CD8-positive, alpha-beta T cell (primary cell): ENCODE measurements at regions of chr13 and their contacts with region 1.

Region 1: DNA sequence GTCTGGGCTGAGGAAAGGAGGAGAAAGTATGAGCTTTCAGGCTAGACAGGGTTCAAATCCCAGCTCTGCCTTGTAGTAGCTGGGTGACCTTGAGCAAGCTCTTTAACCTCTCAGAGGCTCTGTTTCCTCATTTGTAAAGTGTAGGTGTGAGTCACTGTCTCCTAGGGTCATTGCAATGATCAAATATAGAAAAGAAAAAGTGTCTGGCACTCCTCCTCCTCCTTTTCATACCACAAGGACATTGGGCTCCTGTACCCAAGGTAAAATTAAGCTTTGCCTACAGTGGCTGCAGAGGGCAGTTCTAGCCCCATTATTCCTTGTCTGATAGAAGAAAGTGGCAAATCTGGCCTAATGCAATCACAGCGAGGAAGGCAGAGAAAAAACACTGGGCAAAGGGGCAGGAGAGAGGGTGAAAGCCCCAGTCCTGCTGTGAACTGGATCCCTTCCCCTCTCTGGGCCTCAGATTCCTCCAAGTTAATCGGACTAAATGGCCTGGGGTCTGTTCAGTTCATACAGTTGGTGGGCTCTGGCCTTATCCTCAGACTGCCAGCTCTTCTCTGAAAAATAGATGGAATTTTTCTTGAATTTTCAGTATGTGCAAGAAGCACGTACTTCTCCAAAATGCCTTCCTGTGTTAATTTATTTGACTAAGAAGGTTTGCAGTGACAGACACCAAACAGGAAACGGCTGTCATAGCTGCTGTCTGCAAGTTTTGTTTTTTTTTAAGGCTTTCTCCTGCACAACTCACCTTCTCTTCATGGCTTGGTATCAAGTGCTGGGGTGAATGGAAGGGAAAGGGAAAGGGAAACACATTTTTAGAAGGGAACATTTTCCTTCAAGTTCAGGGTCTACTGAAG is 35.3 kb downstream of the RGCC start:
- DNase-seq: peak in 6 of 9 experiments; percentile 26 to 84 (median 63)
- ATAC-seq: peak; percentile 67
- H3K4me3 ChIP-seq: peak overlapping the region in 1 of 2 experiments; percentile 18
- H3K4me3 Mint-ChIP-seq: peak overlapping the region; percentile 75
- H3K27ac ChIP-seq: peak overlapping the region; percentile 70 to 89
- H3K27ac Mint-ChIP-seq: peak overlapping the region; percentile 99
- H3K4me1 ChIP-seq: peaks cover 70% of the 10 kb centered on the region
- H3K4me1 Mint-ChIP-seq: peaks cover 84% of the 10 kb centered on the region
- H3K27me3 ChIP-seq: no peaks in the 10 kb centered on the region
- H3K27me3 Mint-ChIP-seq: no peaks in the 10 kb centered on the region
- CTCF ChIP-seq: no peak

Region 2: GRCh38 chr13:40863723-40864122 is 628.9 kb before region 1 on chr13:
- CTCF ChIA-PET with region 1: no interaction called
- POLR2A ChIA-PET with region 1: no interaction called
- intact Hi-C with region 1: no loop called
- DNase-seq: no peak
- ATAC-seq: no peak
- H3K4me3 ChIP-seq: no peak overlapping the region
- H3K4me3 Mint-ChIP-seq: no peak overlapping the region
- H3K27ac ChIP-seq: no peak overlapping the region
- H3K27ac Mint-ChIP-seq: no peak overlapping the region
- H3K4me1 ChIP-seq: no peaks in the 10 kb centered on the region
- H3K4me1 Mint-ChIP-seq: no peaks in the 10 kb centered on the region
- H3K27me3 ChIP-seq: no peaks in the 10 kb centered on the region
- H3K27me3 Mint-ChIP-seq: no peaks in the 10 kb centered on the region
- CTCF ChIP-seq: no peak

Region 3: GRCh38 chr13:41310963-41311606 is 181.5 kb before region 1 on chr13 and contains the start of gene NAA16:
- CTCF ChIA-PET with region 1: no interaction called
- POLR2A ChIA-PET with region 1: no interaction called
- intact Hi-C with region 1: no loop called
- DNase-seq: peak; percentile 87 to 98 (median 95)
- ATAC-seq: peak; percentile 88
- H3K4me3 ChIP-seq: peak within 1 kb of the TSS; percentile 72 to 97
- H3K4me3 Mint-ChIP-seq: peak within 1 kb of the TSS; percentile 98
- H3K27ac ChIP-seq: peak within 1 kb of the TSS; percentile 72 to 83
- H3K27ac Mint-ChIP-seq: peak within 1 kb of the TSS; percentile 96
- H3K4me1 ChIP-seq: peaks cover 25% of the 10 kb centered on the region
- H3K4me1 Mint-ChIP-seq: peaks cover 41% of the 10 kb centered on the region
- H3K27me3 ChIP-seq: no peaks in the 10 kb centered on the region
- H3K27me3 Mint-ChIP-seq: no peaks in the 10 kb centered on the region
- CTCF ChIP-seq: no peak
- total RNA-seq, gene NAA16: 103 to 105 TPM

Region 4: GRCh38 chr13:41465241-41465847 is 27.3 kb before region 1 on chr13:
- CTCF ChIA-PET with region 1: interaction called, 89 read pairs
- POLR2A ChIA-PET with region 1: interaction called, 26 read pairs
- intact Hi-C with region 1: loop called (anchors 2 kb)
- DNase-seq: peak; percentile 75 to 95 (median 89)
- ATAC-seq: peak; percentile 72
- H3K4me3 ChIP-seq: peak overlapping the region in 1 of 2 experiments; percentile 6
- H3K4me3 Mint-ChIP-seq: peak overlapping the region; percentile 88
- H3K27ac ChIP-seq: peak overlapping the region; percentile 82 to 91
- H3K27ac Mint-ChIP-seq: peak overlapping the region; percentile 99
- H3K4me1 ChIP-seq: peaks cover 90% of the 10 kb centered on the region
- H3K4me1 Mint-ChIP-seq: peaks cover 92% of the 10 kb centered on the region
- H3K27me3 ChIP-seq: no peaks in the 10 kb centered on the region
- H3K27me3 Mint-ChIP-seq: no peaks in the 10 kb centered on the region
- CTCF ChIP-seq: no peak

Region 5: GRCh38 chr13:41502673-41503072 is 10.0 kb after region 1 on chr13:
- CTCF ChIA-PET with region 1: no interaction called
- POLR2A ChIA-PET with region 1: interaction called, 15 read pairs
- intact Hi-C with region 1: no loop called
- DNase-seq: peak in 5 of 9 experiments; percentile 23 to 55 (median 44)
- ATAC-seq: peak; percentile 65
- H3K4me3 ChIP-seq: no peak overlapping the region
- H3K4me3 Mint-ChIP-seq: peak overlapping the region; percentile 29
- H3K27ac ChIP-seq: no peak overlapping the region
- H3K27ac Mint-ChIP-seq: peak overlapping the region; percentile 81
- H3K4me1 ChIP-seq: peaks cover 39% of the 10 kb centered on the region
- H3K4me1 Mint-ChIP-seq: peaks cover 40% of the 10 kb centered on the region
- H3K27me3 ChIP-seq: peaks cover 0 to 2% of the 10 kb centered on the region in 2 experiments
- H3K27me3 Mint-ChIP-seq: no peaks in the 10 kb centered on the region
- CTCF ChIP-seq: no peak